ENCODE measurements at regions of chr21 and their contacts with region 1.

Region 1: DNA sequence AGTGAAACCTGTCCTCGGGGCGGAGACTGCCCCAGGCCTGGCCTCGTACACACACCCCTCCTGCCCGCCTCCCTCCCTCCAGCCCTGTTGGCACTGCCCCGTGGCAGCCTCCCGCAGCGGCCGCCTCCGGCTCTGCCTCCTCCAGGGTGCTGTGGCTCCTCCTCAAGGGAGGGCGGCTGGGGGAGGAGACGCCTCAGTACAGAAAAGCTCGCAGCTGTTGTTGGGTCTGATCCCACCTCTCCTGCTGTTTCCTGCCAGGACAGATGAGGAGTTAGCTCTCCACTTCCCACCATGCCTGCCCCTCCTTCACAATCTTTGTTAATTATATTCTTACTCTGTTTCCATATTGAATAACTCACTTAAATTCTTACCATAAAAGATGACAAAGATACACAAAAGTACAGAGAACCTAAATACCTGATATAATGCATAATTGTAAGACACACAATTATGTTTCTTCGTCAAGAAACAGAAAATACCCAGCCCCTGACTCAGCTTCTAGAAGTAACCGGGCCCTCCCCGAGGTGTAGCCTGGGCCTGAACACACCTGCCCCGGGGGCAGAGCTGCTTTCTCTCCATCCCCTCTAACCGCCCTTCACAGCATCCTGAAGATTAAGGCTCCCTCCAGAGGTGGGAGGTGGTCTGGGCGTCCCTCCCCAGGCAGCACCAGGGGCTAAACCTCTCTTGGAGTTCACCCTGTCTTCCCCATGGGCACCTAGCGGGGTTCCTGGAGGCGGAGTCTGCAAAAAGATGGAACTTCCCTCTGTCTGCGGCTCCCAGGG is 30.6 kb upstream of the COL6A1 start:
- DNase-seq: no peak
- H3K4me3 ChIP-seq: no peak overlapping the region
- CTCF ChIP-seq: no peak

Region 2: GRCh38 chr21:45880097-45881068 is 70.5 kb before region 1 on chr21:
- in situ Hi-C with region 1: loop called (anchors 5 kb)
- DNase-seq: peak; percentile 66
- H3K4me3 ChIP-seq: no peak overlapping the region
- CTCF ChIP-seq: peak; percentile 70

Region 3: GRCh38 chr21:46110499-46111192 is 159.7 kb after region 1 on chr21:
- in situ Hi-C with region 1: loop called (anchors 10 kb)
- DNase-seq: no peak
- H3K4me3 ChIP-seq: no peak overlapping the region
- CTCF ChIP-seq: peak; percentile 4

Measured in astrocyte of the cerebellum (primary cell).